ENCODE measurements at regions of chr5 and their contacts with region 1.

Region 1: DNA sequence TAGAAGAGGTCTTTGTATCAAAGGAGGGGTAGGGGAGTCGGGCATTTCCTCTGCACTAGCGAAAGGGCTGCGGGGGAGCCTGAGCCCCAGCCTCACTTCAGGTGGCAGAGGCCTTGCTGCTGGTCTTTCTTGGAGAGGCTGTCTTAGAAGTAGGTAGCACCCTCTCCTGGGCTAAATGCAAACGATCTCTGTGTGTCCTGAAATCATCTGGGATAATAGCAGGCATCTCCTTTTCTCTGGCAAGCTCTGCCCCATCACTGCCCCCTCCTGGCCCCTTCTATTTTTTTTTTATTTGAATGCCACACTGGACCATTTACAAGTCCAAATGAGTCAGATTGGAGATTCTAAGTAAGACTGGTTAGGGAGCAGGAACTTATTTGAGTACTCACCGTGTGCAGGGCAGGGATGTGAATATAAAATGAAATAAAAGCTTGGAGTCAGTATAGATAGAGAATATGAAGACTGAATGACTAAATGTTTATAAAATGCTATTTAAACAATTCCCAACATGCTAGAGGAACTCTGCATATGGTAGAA is 137.1 kb downstream of the FGF1 start:
- DNase-seq: no peak
- ATAC-seq: peak; percentile 57 to 80 (median 70)
- H3K4me3 ChIP-seq: no peak overlapping the region
- H3K27ac ChIP-seq: no peak overlapping the region
- H3K4me1 ChIP-seq: no peaks in the 10 kb centered on the region
- H3K27me3 ChIP-seq: peaks cover 0 to 19% (median 0%) of the 10 kb centered on the region in 3 donors
- CTCF ChIP-seq: peak; percentile 61

Region 2: GRCh38 chr5:142324871-142325724 is 223.7 kb before region 1 on chr5 and contains the start of gene SPRY4:
- intact Hi-C with region 1: loop called in 1 of 2 experiments (anchors 5 kb)
- DNase-seq: peak; percentile 91 to 95
- ATAC-seq: peak; percentile 74 to 86 (median 82)
- H3K4me3 ChIP-seq: peak within 1 kb of the TSS; percentile 73
- H3K27ac ChIP-seq: peak within 1 kb of the TSS; percentile 77
- H3K4me1 ChIP-seq: peaks cover 23% of the 10 kb centered on the region
- H3K27me3 ChIP-seq: peaks cover 0 to 50% (median 10%) of the 10 kb centered on the region in 3 donors
- CTCF ChIP-seq: no peak
- total RNA-seq, gene SPRY4: 5.3 to 6.3 (median 5.9) TPM

Region 3: GRCh38 chr5:142847881-142848790 is 299.3 kb after region 1 on chr5:
- intact Hi-C with region 1: no loop called
- DNase-seq: no peak
- ATAC-seq: no peak
- H3K4me3 ChIP-seq: no peak overlapping the region
- H3K27ac ChIP-seq: no peak overlapping the region
- H3K4me1 ChIP-seq: peaks cover 48% of the 10 kb centered on the region
- H3K27me3 ChIP-seq: no peaks in the 10 kb centered on the region
- CTCF ChIP-seq: no peak